ENCODE measurements at regions of chr11 and their contacts with region 1.

Region 1: GRCh38 chr11:122439911-122440810 is 215.4 kb upstream of the UBASH3B start:
- DNase-seq: no peak
- ATAC-seq: peak; percentile 87

Region 2: DNA sequence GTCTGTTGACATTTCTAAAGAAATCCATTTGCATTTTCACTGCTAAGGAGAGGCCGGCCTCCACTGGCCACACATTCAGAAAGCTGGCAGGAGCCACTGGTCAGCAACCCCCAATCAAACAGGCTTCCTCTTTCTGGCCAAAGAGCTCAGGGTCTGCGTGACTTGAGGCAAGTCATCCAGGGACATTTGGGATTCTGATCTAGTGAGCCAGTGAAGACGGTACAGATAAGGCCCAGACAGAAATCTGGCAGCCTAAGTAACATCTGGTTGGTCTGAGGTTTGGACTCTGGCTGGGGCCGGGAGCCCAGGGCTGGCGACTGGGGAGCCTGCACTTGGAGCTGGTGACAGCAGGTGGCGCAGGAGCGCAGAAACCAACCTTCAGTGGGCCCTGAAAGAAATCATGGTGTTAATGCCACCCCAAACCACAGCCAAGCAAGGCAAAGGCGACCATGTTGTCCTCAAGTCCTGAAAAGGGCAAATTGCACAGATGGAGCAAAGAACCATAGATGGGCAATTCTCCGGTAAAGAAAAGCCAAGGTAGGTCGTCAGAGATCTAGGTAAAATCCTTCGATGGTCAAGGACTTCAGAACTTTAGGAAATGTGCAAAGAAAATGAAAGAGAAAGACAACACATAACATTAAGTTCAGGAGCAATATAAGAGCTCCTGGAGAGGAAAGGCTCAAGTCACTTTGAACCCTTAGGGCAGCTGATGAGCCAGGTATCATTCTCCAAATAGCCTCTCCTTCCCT is 224.7 kb before region 1 on chr11:
- intact Hi-C with region 1: loop called (anchors 5 kb)
- DNase-seq: peak; percentile 87
- ATAC-seq: peak; percentile 98

Region 3: GRCh38 chr11:122309262-122309925 is 130.8 kb before region 1 on chr11:
- intact Hi-C with region 1: loop called (anchors 2 kb)
- DNase-seq: no peak
- ATAC-seq: peak; percentile 83

Region 4: DNA sequence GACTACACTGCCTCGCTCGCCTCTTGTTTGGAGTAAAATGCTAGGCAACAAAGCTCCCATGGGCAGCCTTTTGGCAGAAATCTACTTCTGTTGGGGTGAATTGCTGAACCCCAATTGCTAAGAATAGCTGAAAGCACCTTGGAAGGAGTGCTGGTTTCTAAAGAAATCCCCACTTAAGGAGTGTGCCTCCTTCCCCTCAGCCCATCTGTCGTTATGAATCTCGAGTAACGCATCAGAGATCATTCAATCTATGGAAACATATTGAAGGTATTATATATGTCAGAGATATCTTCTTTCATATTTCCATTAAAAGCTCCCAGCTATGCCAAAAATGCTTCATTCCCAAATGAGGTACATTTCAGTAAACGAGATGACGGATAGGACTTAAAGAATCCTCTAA is 94.6 kb before region 1 on chr11:
- intact Hi-C with region 1: loop called (anchors 5 kb)
- DNase-seq: no peak
- ATAC-seq: no peak

Region 5: DNA sequence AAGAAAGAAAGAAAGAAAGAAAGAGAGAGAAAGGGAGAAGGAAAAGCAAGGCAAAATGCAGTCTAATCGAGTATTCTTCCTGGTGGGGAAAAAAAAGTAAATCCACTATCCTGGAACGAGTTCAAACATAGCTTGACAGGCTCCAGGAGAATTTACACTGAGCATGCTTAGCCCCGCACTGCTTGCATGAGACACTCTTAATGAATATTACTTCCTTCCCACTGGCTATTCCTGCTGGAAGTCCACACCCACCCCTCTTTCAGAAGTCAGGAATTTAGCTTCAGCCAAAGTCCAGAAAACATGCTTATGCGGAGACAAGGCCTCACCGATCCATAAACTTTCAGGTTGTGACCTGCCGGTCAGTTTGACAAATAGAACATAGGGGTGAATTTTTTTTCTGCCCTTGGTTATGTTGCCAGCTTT is 72.3 kb before region 1 on chr11:
- intact Hi-C with region 1: loop called (anchors 5 kb)
- DNase-seq: no peak
- ATAC-seq: peak; percentile 81

Region 6: GRCh38 chr11:122578168-122578825 is 138.1 kb after region 1 on chr11:
- intact Hi-C with region 1: no loop called
- DNase-seq: no peak
- ATAC-seq: no peak